CD8-positive, alpha-beta T cell (primary cell): ENCODE measurements at regions of chr16 and their contacts with region 1.

Region 1: DNA sequence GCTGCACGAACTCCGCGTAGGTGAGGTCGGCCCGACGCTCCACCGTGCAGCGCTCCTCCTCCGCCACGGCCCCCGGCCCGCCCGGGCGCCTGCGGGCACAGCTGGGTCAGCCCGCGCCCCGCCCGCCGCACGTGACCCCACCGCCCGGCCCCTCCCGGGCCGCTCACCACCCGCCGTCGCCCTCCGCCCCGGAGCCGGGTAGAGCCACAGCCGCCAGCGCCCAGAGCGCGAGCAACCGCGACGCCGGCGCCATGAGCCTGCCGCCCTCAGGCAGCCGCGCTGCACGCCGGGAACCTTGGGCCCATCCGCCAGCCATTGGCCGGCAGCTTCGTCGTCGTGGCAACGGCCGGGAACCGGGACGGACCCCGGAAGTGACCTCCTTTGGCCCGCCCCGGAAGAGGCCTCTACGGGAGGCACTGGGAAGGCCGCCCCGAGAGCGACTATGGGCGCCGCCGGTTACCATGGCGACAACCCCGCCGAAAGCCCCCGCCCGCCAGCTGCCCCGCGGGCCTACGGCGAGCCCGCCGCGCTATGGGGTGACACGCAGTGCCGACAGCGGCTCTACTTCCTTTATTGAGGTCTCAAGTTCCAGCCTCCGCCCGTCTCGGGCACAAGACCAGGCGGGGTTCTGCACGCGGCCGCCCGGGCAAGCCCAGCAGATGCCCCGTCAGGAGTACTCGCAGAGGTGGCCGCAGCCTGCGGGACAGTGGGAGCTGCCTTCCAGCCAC is at the start of gene JMJD8:
- DNase-seq: peak; percentile 88 to 98 (median 97)
- ATAC-seq: peak; percentile 43
- H3K4me3 ChIP-seq: peak within 1 kb of the TSS; percentile 60 to 66
- H3K4me3 Mint-ChIP-seq: peak within 1 kb of the TSS; percentile 78
- H3K27ac ChIP-seq: peak within 1 kb of the TSS; percentile 69 to 80
- H3K27ac Mint-ChIP-seq: peak within 1 kb of the TSS; percentile 72
- H3K4me1 ChIP-seq: peaks cover 39% of the 10 kb centered on the region
- H3K4me1 Mint-ChIP-seq: peaks cover 35% of the 10 kb centered on the region
- H3K27me3 ChIP-seq: no peaks in the 10 kb centered on the region
- H3K27me3 Mint-ChIP-seq: no peaks in the 10 kb centered on the region
- CTCF ChIP-seq: no peak
- total RNA-seq, gene JMJD8: 15.8 to 18.7 TPM

Region 2: GRCh38 chr16:450385-451134 is 233.7 kb before region 1 on chr16:
- CTCF ChIA-PET with region 1: no interaction called
- POLR2A ChIA-PET with region 1: no interaction called
- intact Hi-C with region 1: no loop called
- DNase-seq: no peak
- ATAC-seq: no peak
- H3K4me3 ChIP-seq: no peak overlapping the region
- H3K4me3 Mint-ChIP-seq: no peak overlapping the region
- H3K27ac ChIP-seq: no peak overlapping the region
- H3K27ac Mint-ChIP-seq: no peak overlapping the region
- H3K4me1 ChIP-seq: no peaks in the 10 kb centered on the region
- H3K4me1 Mint-ChIP-seq: peaks cover 6% of the 10 kb centered on the region
- H3K27me3 ChIP-seq: no peaks in the 10 kb centered on the region
- H3K27me3 Mint-ChIP-seq: no peaks in the 10 kb centered on the region
- CTCF ChIP-seq: no peak

Region 3: DNA sequence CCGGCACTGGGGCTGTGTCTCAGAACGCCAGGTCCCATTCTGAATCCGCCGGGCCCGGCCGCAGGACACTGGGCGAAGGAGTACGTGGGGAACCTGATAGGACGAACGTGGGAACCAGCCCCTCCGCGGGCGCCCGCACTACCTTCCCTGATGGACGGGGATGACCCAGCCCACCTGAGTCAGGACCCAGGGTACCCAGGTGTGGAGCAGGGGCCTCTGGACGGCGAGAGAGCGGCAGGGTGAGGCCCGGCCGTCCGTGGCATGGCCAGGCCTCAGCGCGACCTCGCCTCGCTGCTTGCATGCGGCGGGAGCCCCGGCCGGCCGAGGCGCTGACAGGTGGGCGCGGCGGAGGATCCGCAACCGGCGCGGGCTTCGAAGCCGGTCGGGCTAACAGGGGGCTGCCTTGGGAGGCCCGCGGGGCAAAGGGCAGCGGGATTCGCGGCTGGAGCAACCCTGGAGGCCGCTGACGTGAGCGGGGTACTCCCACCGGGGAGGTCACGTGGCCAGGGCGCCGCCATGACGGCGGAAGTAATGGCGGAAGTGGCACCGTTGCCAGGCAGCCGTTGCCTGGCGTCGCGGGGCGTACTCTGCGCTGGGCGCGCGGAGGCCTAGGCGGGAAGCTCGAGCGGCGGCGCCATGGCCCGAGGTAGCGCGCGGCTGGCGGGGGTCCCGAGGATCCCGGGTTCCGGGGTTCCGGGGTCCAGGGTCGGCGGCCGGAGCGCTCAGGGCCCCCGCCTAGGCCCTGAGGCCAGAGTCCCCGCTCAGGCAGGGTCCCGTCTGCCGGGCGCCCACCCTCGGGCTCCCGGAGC is 35.2 kb before region 1 on chr16 and contains the start of gene WDR90:
- CTCF ChIA-PET with region 1: no interaction called
- POLR2A ChIA-PET with region 1: no interaction called
- intact Hi-C with region 1: loop called in 1 of 2 experiments (anchors 1 kb)
- DNase-seq: peak; percentile 74 to 96 (median 92)
- ATAC-seq: peak; percentile 91
- H3K4me3 ChIP-seq: peak within 1 kb of the TSS; percentile 66 to 88
- H3K4me3 Mint-ChIP-seq: peak within 1 kb of the TSS; percentile 79
- H3K27ac ChIP-seq: peak within 1 kb of the TSS; percentile 72 to 91
- H3K27ac Mint-ChIP-seq: peak within 1 kb of the TSS; percentile 81
- H3K4me1 ChIP-seq: peaks cover 19% of the 10 kb centered on the region
- H3K4me1 Mint-ChIP-seq: peaks cover 20% of the 10 kb centered on the region
- H3K27me3 ChIP-seq: no peaks in the 10 kb centered on the region
- H3K27me3 Mint-ChIP-seq: no peaks in the 10 kb centered on the region
- CTCF ChIP-seq: no peak
- total RNA-seq, gene WDR90: 15.0 to 22.8 TPM

Region 4: GRCh38 chr16:660459-661183 is 23.6 kb before region 1 on chr16:
- CTCF ChIA-PET with region 1: no interaction called
- POLR2A ChIA-PET with region 1: interaction called, 5 read pairs
- intact Hi-C with region 1: loop called in 1 of 2 experiments (anchors 2 kb)
- DNase-seq: peak in 8 of 9 experiments; percentile 43 to 78 (median 68)
- ATAC-seq: peak; percentile 88
- H3K4me3 ChIP-seq: no peak overlapping the region
- H3K4me3 Mint-ChIP-seq: no peak overlapping the region
- H3K27ac ChIP-seq: no peak overlapping the region
- H3K27ac Mint-ChIP-seq: no peak overlapping the region
- H3K4me1 ChIP-seq: peaks cover 6% of the 10 kb centered on the region
- H3K4me1 Mint-ChIP-seq: peaks cover 4% of the 10 kb centered on the region
- H3K27me3 ChIP-seq: no peaks in the 10 kb centered on the region
- H3K27me3 Mint-ChIP-seq: no peaks in the 10 kb centered on the region
- CTCF ChIP-seq: no peak

Region 5: GRCh38 chr16:667780-668518 is 16.3 kb before region 1 on chr16 and contains the start of gene RHOT2:
- CTCF ChIA-PET with region 1: interaction called, 23 read pairs
- POLR2A ChIA-PET with region 1: interaction called, 10 read pairs
- intact Hi-C with region 1: loop called in 1 of 2 experiments (anchors 1 kb)
- DNase-seq: peak; percentile 83 to 96 (median 92)
- ATAC-seq: peak; percentile 92
- H3K4me3 ChIP-seq: peak within 1 kb of the TSS; percentile 62 to 85
- H3K4me3 Mint-ChIP-seq: peak within 1 kb of the TSS; percentile 79
- H3K27ac ChIP-seq: peak within 1 kb of the TSS; percentile 37 to 68
- H3K27ac Mint-ChIP-seq: peak within 1 kb of the TSS; percentile 84
- H3K4me1 ChIP-seq: peaks cover 22% of the 10 kb centered on the region
- H3K4me1 Mint-ChIP-seq: peaks cover 12% of the 10 kb centered on the region
- H3K27me3 ChIP-seq: no peaks in the 10 kb centered on the region
- H3K27me3 Mint-ChIP-seq: no peaks in the 10 kb centered on the region
- CTCF ChIP-seq: peak; percentile 65
- total RNA-seq, gene RHOT2: 163 to 175 TPM

Region 6: GRCh38 chr16:695355-696089 is 11.3 kb after region 1 on chr16:
- CTCF ChIA-PET with region 1: interaction called, 5 read pairs
- POLR2A ChIA-PET with region 1: interaction called, 26 read pairs
- intact Hi-C with region 1: no loop called
- DNase-seq: peak; percentile 41 to 85 (median 62)
- ATAC-seq: peak; percentile 76
- H3K4me3 ChIP-seq: peak overlapping the region; percentile 58 to 59
- H3K4me3 Mint-ChIP-seq: peak overlapping the region; percentile 77
- H3K27ac ChIP-seq: peak overlapping the region in 1 of 2 experiments; percentile 45
- H3K27ac Mint-ChIP-seq: peak overlapping the region; percentile 66
- H3K4me1 ChIP-seq: peaks cover 42% of the 10 kb centered on the region
- H3K4me1 Mint-ChIP-seq: peaks cover 28% of the 10 kb centered on the region
- H3K27me3 ChIP-seq: peaks cover 0 to 17% of the 10 kb centered on the region in 2 experiments
- H3K27me3 Mint-ChIP-seq: no peaks in the 10 kb centered on the region
- CTCF ChIP-seq: no peak